Mucosa of descending colon (tissue), 3 donors: ENCODE measurements at regions of chr2 and their contacts with region 1.

Region 1: DNA sequence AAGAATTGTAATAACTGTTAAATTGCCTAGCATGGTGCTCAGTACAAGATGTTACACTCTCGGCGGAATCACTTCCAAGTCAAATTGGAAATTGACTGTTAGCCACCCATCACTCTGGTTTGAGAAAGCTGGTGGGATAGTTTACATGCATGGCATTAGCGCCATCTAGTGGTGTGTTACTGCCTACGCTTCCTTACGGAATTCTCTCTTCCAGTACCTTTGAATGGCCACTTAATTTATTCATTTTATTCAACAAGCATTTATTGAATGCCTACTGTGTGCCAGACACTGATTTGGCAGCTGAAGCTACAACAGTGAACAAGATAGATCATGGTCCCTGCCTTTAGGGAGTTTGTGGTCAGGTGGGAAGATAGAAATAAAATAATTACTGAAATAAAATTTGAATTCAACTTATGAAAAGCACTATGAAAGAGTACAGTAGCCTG is 171.2 kb downstream of the TMEM247 start:
- DNase-seq: peak in 1 of 3 donors; percentile 86
- ATAC-seq: peak; percentile 87
- H3K4me3 ChIP-seq: no peak overlapping the region
- H3K4me1 ChIP-seq: peaks cover 3% of the 10 kb centered on the region
- CTCF ChIP-seq: peak; percentile 87

Region 2: DNA sequence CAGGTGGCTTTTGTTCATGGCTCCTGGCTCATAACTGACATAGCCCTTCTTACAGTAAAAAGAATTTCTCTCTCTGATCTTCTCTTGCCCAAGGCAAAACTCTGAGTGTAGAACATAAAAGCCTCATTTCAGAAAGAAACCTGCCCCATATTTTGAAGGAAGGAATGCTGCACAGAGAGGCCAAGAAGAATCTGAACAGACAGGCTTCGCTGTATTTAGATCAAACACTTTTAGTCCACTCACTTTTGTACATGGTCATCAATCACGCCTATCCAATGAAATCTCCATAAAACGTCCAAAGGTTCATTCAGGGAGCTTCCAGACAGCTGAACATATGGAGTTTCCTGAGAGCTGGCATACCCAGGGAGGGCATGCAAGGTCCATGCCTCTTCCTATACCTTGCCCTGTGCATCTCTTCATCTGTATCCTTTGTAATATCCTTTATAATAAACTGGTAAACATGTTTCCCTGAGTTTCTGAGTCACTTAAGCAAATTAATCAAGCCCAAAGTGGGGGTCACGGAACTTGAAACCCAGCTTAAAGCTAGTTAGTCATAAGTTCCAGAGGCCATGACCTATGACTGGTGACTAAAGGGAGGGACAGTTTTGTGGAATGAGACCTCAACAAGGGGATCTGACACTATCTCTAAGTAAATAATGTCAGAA is 233.7 kb before region 1 on chr2:
- intact Hi-C with region 1: no loop called
- DNase-seq: no peak
- ATAC-seq: peak; percentile 71
- H3K4me3 ChIP-seq: no peak overlapping the region
- H3K4me1 ChIP-seq: no peaks in the 10 kb centered on the region
- CTCF ChIP-seq: no peak

Region 3: GRCh38 chr2:46887028-46887885 is 236.7 kb after region 1 on chr2:
- intact Hi-C with region 1: loop called in 1 of 2 experiments (anchors 5 kb)
- DNase-seq: no peak
- ATAC-seq: no peak
- H3K4me3 ChIP-seq: no peak overlapping the region
- H3K4me1 ChIP-seq: peaks cover 8% of the 10 kb centered on the region
- CTCF ChIP-seq: no peak

Region 4: DNA sequence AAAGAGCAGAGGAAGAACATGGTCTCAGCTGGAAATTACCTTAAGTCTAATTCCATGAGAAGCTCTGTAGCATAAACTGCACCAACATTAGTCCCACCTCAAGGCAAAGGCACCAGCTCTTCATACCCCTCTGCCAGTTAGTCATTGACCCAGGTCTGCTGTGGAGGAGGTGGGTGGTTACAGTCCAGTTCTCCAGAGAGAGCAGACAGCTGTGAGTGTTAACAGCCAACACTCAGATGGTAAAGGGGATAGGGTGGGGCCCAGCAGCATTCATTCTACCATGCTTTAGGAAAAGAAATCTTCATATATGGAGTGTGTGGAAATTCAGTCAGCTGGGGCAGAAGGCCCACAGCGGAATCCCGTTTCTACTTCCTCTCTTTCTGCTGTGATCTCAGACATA is 1415.4 kb after region 1 on chr2:
- intact Hi-C with region 1: no loop called
- DNase-seq: no peak
- ATAC-seq: no peak
- H3K4me3 ChIP-seq: no peak overlapping the region
- H3K4me1 ChIP-seq: no peaks in the 10 kb centered on the region
- CTCF ChIP-seq: no peak